H1 (cell line): ENCODE measurements at regions of chr6 and their contacts with region 1.

Region 1: DNA sequence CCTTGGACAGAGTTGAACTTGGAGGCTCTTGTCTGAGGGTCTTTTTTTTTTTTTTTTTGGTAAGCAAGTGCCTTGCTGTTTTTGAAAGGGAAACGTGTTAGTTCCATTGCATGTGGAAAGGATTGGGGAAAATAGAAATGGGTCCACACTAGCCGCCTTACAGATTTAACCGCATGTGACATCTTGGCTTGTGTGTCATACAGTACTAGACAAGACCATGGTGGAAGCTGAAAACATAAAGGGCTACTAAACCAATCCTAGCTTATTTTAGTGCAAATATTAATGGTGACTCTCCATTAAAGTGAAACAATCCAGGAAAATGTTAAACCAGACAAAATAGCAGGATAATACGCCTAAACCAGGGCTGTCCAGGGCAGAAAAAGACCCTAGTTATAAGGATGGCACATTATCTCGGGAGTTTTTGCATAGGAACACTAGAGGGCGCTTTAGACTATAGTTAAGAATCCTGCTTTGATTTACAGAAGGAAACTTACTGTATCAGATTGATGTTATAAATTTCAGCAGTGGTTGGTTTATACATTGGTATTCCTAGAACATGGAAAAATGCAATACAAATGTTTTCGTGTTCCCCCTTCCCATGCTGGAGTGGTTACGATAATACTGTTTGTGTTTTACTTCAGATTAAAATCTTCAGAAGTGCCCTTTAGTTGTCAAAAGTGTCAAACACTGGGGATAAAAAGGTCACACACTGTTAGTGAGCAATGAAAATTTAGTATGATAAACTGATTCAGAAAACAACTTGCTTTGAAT is 59.8 kb upstream of the DEK start:
- DNase-seq: no peak
- H3K4me3 ChIP-seq: no peak overlapping the region
- H3K27ac ChIP-seq: no peak overlapping the region
- H3K4me1 ChIP-seq: no peaks in the 10 kb centered on the region
- H3K27me3 ChIP-seq: no peaks in the 10 kb centered on the region
- CTCF ChIP-seq: peak in 2 of 3 experiments; percentile 62 to 72; a peak in 2 of 4 replicates
- EP300 ChIP-seq: no peak
- POLR2A ChIP-seq: no peak
- RAD21 ChIP-seq: peak; percentile 85 to 86

Region 2: GRCh38 chr6:18335948-18336347 is 11.8 kb after region 1 on chr6:
- CTCF ChIA-PET with region 1: interaction called, 16 read pairs
- POLR2A ChIA-PET with region 1: no interaction called
- DNase-seq: no peak
- H3K4me3 ChIP-seq: no peak overlapping the region
- H3K27ac ChIP-seq: no peak overlapping the region
- H3K4me1 ChIP-seq: peaks cover 0 to 3% (median 1%) of the 10 kb centered on the region in 4 experiments; a peak in 2 of 7 replicates
- H3K27me3 ChIP-seq: no peaks in the 10 kb centered on the region
- CTCF ChIP-seq: no peak
- EP300 ChIP-seq: no peak
- POLR2A ChIP-seq: no peak
- RAD21 ChIP-seq: no peak

Region 3: DNA sequence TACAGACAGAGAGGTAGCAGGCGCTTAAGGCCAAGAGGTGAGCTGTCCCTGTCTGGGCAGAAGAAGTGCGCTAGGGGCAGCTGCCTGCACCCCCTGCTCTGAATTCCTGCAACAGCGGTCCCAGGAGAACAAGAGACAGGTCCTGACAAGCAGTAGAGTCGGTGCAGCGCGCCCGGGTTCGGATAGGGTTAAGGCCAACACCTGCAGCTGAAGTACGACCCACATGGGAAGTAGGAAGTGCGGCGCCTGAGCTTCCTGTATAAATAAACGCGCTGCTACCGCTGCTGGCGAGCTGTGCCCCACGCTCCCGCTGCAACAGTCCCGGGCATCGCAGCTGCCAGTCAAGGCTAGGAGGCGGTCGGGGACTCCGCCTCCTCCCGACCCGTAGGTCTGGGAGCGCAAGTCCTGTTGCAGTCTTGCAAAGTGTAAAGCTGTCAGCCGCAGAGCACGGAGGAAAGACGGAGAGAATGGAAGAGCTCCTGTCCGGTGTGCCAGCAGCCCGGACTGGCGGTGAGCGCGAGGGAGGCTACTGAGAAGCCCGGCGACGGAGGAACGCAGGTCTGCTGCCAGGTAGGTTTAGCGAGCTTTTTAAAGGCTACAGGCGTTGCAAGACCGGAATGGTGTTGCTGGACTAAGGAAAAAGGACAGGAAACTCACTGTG is 63.1 kb after region 1 on chr6 and contains the start of gene RNF144B:
- CTCF ChIA-PET with region 1: interaction called, 12 read pairs
- POLR2A ChIA-PET with region 1: no interaction called
- DNase-seq: peak; percentile 82 to 88
- H3K4me3 ChIP-seq: peak within 1 kb of the TSS; percentile 41 to 66 (median 48)
- H3K27ac ChIP-seq: no peak within 1 kb of the TSS; the same call in 1 of the 2 replicates
- H3K4me1 ChIP-seq: peaks cover 0 to 11% (median 8%) of the 10 kb centered on the region in 4 experiments; a peak in 4 of 7 replicates
- H3K27me3 ChIP-seq: no peaks in the 10 kb centered on the region
- CTCF ChIP-seq: no peak
- EP300 ChIP-seq: no peak
- POLR2A ChIP-seq: peak in 1 of 2 experiments; percentile 47; a peak in 1 of 3 replicates
- RAD21 ChIP-seq: peak in 1 of 2 experiments; percentile 1; a peak in 1 of 4 replicates
- total RNA-seq, gene RNF144B: 9.8 and 11.2 TPM in 2 replicates

Region 4: GRCh38 chr6:18503593-18504231 is 179.6 kb after region 1 on chr6:
- CTCF ChIA-PET with region 1: interaction called, 268 read pairs
- POLR2A ChIA-PET with region 1: interaction called, 3 read pairs
- DNase-seq: peak; percentile 23 to 57
- H3K4me3 ChIP-seq: no peak overlapping the region
- H3K27ac ChIP-seq: no peak overlapping the region
- H3K4me1 ChIP-seq: no peaks in the 10 kb centered on the region
- H3K27me3 ChIP-seq: no peaks in the 10 kb centered on the region
- CTCF ChIP-seq: peak; percentile 57 to 96 (median 95)
- EP300 ChIP-seq: no peak
- POLR2A ChIP-seq: no peak
- RAD21 ChIP-seq: peak; percentile 100

Region 5: DNA sequence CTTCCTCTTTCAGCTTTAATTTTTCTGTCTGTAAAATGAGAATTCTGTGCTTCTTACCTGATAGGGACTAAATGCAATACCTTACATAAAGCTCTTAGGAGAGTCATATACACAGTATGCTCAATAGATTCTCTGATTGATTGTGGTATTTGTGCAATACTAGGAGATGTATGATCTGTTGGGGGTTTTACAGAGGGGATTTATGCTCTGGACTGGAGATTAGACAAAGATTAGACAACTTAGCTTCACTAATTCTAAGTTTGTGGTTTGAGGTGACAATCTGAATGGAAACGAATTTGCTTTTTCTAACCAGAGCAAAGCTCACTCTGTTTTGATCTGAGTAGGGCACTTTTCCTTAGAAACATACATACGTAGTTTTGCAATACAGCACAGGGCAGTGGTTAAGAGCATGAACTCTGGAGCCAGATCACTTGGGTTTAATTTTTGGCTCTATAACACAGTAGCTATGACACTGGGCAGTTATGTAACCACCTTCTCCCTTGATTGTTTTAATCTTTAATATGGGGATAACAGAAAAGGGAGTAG is 189.2 kb after region 1 on chr6:
- CTCF ChIA-PET with region 1: interaction called, 268 read pairs
- POLR2A ChIA-PET with region 1: no interaction called
- DNase-seq: no peak
- H3K4me3 ChIP-seq: no peak overlapping the region
- H3K27ac ChIP-seq: no peak overlapping the region
- H3K4me1 ChIP-seq: peaks cover 0 to 4% (median 2%) of the 10 kb centered on the region in 4 experiments; a peak in 2 of 7 replicates
- H3K27me3 ChIP-seq: no peaks in the 10 kb centered on the region
- CTCF ChIP-seq: no peak
- EP300 ChIP-seq: no peak
- POLR2A ChIP-seq: no peak
- RAD21 ChIP-seq: no peak

Region 6: GRCh38 chr6:19906171-19906570 is 1582.1 kb after region 1 on chr6:
- CTCF ChIA-PET with region 1: no interaction called
- POLR2A ChIA-PET with region 1: no interaction called
- DNase-seq: no peak
- H3K4me3 ChIP-seq: no peak overlapping the region
- H3K27ac ChIP-seq: no peak overlapping the region
- H3K4me1 ChIP-seq: no peaks in the 10 kb centered on the region
- H3K27me3 ChIP-seq: no peaks in the 10 kb centered on the region
- CTCF ChIP-seq: no peak
- EP300 ChIP-seq: no peak
- POLR2A ChIP-seq: no peak
- RAD21 ChIP-seq: no peak